HEK293 (cell line): ENCODE measurements at regions of chr2 and their contacts with region 1.

Region 1: GRCh38 chr2:28821295-28821958 is 10.8 kb downstream of the SPDYA start:
- H3K4me3 ChIP-seq: no peak overlapping the region
- H3K27ac ChIP-seq: no peak overlapping the region
- H3K4me1 ChIP-seq: no peaks in the 10 kb centered on the region
- CTCF ChIP-seq: peak; percentile 75

Region 2: DNA sequence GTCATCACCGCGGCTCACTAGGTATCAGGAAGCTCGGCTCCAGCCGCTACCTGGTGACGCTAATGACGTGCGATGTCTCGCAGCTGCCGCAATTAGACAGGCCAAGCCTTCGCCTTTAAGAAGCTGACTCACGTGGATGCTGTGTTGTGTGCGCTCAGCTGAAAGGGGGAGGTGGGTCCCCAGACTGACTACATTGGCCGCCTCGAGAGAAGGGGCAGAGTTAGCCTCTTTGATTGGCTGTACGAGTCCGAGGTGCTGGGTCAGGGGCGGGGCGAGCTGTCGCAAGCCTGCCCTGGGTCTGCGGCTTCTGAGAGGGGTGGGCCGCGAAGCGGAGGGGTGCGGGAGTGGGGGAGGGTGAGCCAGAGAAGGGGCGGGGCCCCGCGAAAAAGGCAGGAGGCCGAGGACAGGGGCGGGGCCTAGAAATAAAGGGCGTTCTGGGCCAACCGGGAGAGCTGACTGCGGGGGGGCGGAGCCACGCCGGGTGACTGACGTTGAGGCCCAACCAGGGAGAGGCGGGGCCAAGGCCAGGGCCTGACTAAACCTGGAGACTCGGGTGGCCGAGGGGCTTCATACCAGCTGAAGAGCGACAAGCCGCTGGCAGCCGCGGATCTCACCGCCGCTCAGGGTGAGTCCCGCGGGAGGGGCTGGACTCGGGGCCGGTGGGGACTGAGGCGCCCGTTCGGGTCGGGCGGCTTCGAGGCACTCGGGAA is 1325.2 kb after region 1 on chr2 and contains the start of gene YPEL5:
- CTCF ChIA-PET with region 1: no interaction called
- POLR2A ChIA-PET with region 1: interaction called, 18 read pairs
- H3K4me3 ChIP-seq: peak within 1 kb of the TSS; percentile 80
- H3K27ac ChIP-seq: peak within 1 kb of the TSS; percentile 92
- H3K4me1 ChIP-seq: peaks cover 22% of the 10 kb centered on the region
- CTCF ChIP-seq: no peak